ENCODE measurements at regions of chr6 and their contacts with region 1.

Region 1: GRCh38 chr6:143060354-143060805 is 309 bp upstream of the AIG1 start:
- DNase-seq: peak; percentile 81 to 83
- ATAC-seq: peak; percentile 90 to 95 (median 92)
- H3K4me3 ChIP-seq: peak overlapping the region; percentile 77 to 96 (median 83)
- H3K27ac ChIP-seq: peak overlapping the region; percentile 90 to 97 (median 94)
- H3K4me1 ChIP-seq: peaks cover 0 to 30% (median 21%) of the 10 kb centered on the region in 9 donors
- H3K27me3 ChIP-seq: no peaks in the 10 kb centered on the region
- CTCF ChIP-seq: peak in 5 of 9 donors; percentile 6 to 35 (median 18)

Region 2: DNA sequence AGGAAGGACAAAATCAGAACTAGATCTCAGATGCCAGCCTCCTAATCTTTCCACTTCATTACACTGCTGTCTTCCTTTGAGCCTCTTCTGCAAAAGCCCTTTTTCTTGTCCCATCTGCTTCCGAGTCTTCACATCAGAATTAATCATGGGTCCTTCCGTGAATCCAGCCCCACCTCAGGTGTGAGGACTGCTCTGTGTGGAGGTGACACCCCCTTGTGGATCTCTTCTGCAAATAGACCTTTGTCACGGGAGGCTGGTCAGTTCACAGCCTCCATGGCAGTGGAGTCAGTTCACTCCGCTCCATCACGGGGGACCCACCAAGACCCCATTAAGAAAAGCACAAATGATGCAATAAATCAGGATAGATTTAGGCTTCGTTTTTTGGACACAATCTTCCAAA is 219.0 kb after region 1 on chr6:
- intact Hi-C with region 1: loop called in 3 of 10 experiments (anchors 10 kb)
- DNase-seq: no peak
- ATAC-seq: peak in 4 of 8 donors; percentile 59 to 88 (median 71)
- H3K4me3 ChIP-seq: no peak overlapping the region
- H3K27ac ChIP-seq: no peak overlapping the region
- H3K4me1 ChIP-seq: peaks cover 0 to 5% (median 0%) of the 10 kb centered on the region in 9 donors
- H3K27me3 ChIP-seq: no peaks in the 10 kb centered on the region
- CTCF ChIP-seq: peak in 8 of 9 donors; percentile 19 to 60 (median 40)